ENCODE measurements at regions of chr9 and their contacts with region 1.

Region 1: GRCh38 chr9:5186416-5187169 is 1.2 kb upstream of the INSL6 start:
- DNase-seq: peak; percentile 87
- H3K4me3 Mint-ChIP-seq: no peak overlapping the region
- H3K27ac Mint-ChIP-seq: no peak overlapping the region
- H3K4me1 Mint-ChIP-seq: peaks cover 17% of the 10 kb centered on the region
- H3K27me3 Mint-ChIP-seq: peaks cover 1% of the 10 kb centered on the region

Region 2: DNA sequence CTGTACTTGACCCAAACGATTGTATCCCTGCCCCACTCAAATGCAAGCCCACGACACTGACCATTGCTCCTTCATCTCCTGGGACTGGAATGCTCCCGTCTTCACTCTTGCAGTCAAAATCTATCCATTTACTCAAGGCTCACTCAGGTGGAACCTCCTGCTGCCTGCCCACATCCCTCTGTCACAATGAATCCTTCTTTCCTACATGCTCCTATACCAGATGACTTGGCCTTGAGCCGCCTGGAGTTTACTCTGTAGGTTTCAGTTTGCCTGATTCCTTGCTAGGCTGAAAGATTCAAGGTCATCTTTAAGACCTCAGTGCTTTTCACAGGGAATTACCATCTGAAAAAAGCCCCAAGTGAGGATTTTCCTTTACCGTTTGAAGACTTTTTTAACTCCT is 1150.8 kb before region 1 on chr9:
- intact Hi-C with region 1: no loop called
- DNase-seq: no peak
- H3K4me3 Mint-ChIP-seq: no peak overlapping the region
- H3K27ac Mint-ChIP-seq: no peak overlapping the region
- H3K4me1 Mint-ChIP-seq: no peaks in the 10 kb centered on the region
- H3K27me3 Mint-ChIP-seq: no peaks in the 10 kb centered on the region

Region 3: GRCh38 chr9:5425006-5425628 is 238.5 kb after region 1 on chr9:
- intact Hi-C with region 1: loop called (anchors 1 kb)
- DNase-seq: no peak
- H3K4me3 Mint-ChIP-seq: no peak overlapping the region
- H3K27ac Mint-ChIP-seq: no peak overlapping the region
- H3K4me1 Mint-ChIP-seq: peaks cover 11% of the 10 kb centered on the region
- H3K27me3 Mint-ChIP-seq: no peaks in the 10 kb centered on the region

Region 4: GRCh38 chr9:5470122-5470521 is 283.5 kb after region 1 on chr9:
- intact Hi-C with region 1: no loop called
- DNase-seq: no peak
- H3K4me3 Mint-ChIP-seq: no peak overlapping the region
- H3K27ac Mint-ChIP-seq: no peak overlapping the region
- H3K4me1 Mint-ChIP-seq: peaks cover 24% of the 10 kb centered on the region
- H3K27me3 Mint-ChIP-seq: no peaks in the 10 kb centered on the region

Measured in activated CD4-positive, alpha-beta T cell treated with anti-CD3 and anti-CD28 coated beads, Interleukin-2, amount 10 ng/mL, durations not matched to agents 24 days and 14 days (primary cell).